ENCODE measurements at regions of chr9 and their contacts with region 1.

Region 1: DNA sequence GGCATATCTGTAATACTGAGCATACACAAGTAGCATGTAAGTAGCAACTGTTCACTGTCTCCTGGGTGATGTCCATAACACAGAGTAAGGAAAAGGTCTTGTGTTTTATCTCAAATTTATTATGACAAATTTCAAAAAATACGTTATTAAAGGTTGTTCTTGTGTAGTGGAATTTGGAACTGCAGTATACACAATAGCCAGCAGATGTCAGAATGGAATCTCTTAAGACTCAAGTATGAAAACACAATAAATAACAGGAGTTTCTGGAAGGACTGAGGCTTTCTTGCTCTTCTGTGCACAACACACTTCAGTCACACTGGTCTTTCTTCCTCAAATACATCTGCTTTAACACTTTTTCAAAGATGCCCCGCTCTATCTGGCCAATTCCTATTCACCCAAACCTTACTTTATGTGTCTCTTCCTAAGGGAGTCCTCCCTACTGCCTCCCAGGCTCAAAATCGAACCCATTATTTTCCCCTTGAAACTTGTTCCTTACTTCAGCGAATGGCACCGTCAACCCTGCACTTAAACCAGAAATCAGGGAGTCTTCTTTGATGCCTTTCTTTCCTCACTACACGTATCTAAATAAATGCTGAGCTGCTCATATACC is 6.5 kb upstream of the FBXO10 start:
- DNase-seq: peak in 1 of 2 experiments; percentile 20
- H3K4me3 ChIP-seq: no peak overlapping the region
- H3K4me3 Mint-ChIP-seq: no peak overlapping the region
- H3K27ac Mint-ChIP-seq: no peak overlapping the region
- H3K4me1 ChIP-seq: no peaks in the 10 kb centered on the region
- H3K4me1 Mint-ChIP-seq: peaks cover 10% of the 10 kb centered on the region
- H3K27me3 ChIP-seq: no peaks in the 10 kb centered on the region
- H3K27me3 Mint-ChIP-seq: no peaks in the 10 kb centered on the region
- CTCF ChIP-seq: peak; percentile 41 to 66

Region 2: DNA sequence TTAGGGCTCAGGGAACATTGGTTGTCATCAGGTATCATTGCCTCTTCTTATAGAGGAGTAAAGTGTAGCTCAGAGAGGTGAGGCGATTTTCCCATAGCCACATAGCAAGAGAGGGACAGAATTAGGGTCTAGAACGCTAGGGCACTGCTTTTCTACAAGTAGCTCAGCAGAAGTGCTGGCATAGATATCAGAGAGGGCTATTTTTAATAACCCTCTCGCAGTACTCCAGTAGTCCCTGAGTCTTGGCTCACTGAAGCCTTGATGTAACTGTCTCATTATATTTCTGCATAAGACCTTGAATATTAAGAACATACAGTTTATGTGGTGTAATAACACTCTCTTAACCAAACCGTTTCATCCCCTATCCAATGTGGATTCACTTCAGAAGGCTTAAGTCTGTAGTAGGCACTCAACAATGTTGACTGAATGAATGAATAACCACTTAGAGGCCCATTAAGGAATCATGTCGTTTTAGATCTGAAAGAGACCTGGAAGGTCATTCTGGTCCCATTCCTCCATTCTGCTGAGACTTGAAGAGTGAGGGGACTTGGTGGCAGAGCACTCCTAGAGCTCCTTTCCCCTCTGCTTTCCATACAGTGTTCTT is 63.4 kb after region 1 on chr9:
- CTCF ChIA-PET with region 1: no interaction called
- POLR2A ChIA-PET with region 1: no interaction called
- intact Hi-C with region 1: loop called (anchors 5 kb)
- DNase-seq: no peak
- H3K4me3 ChIP-seq: no peak overlapping the region
- H3K4me3 Mint-ChIP-seq: no peak overlapping the region
- H3K27ac Mint-ChIP-seq: no peak overlapping the region
- H3K4me1 ChIP-seq: no peaks in the 10 kb centered on the region; the same call in 1 of the 2 replicates
- H3K4me1 Mint-ChIP-seq: no peaks in the 10 kb centered on the region
- H3K27me3 ChIP-seq: no peaks in the 10 kb centered on the region; the same call in 1 of the 2 replicates
- H3K27me3 Mint-ChIP-seq: peaks cover 35% of the 10 kb centered on the region
- CTCF ChIP-seq: no peak

Region 3: DNA sequence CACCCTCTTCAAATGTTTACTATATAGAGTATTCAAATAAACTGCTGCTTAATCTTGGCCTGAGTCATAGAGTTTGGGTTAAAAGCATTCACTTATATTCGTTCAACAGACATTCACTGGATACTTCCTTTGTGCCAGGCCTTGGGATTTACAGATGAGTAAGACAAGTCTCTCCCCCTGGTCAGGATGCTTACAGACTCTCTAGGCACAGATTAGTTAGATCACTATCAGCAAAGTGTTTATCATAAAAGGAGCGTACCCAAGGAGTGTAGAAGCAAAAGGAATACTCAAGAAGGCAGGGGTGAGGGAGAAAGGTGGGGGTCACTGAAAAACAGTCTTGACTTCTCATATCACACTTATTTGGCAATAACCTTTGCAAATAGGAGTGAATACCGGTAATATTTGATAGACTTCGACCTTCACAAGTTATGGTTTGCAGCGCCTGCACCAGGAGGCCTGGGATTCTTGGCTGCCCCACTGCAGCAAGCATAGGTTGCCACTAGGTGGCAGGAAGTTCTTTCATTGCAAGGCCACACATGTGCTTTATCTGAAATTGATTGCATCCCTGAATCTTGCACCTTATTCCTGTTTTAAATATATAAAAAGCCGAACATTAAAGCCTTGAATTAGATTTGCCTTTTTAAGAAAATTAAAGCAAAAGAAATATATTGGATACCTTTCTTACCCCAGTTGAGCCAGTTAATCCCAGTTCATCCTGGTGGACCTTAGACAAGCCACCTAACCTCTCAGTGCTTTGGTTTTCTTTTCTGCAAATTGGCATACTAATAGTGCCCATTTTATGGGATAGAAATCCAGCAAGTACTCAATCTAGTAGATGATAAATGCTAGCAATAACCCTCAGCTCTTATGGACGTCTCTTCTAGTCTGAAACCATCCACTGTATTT is 164.4 kb after region 1 on chr9:
- CTCF ChIA-PET with region 1: no interaction called
- POLR2A ChIA-PET with region 1: no interaction called
- intact Hi-C with region 1: loop called (anchors 2 kb)
- DNase-seq: peak; percentile 61 to 73
- H3K4me3 ChIP-seq: no peak overlapping the region
- H3K4me3 Mint-ChIP-seq: no peak overlapping the region
- H3K27ac Mint-ChIP-seq: no peak overlapping the region
- H3K4me1 ChIP-seq: no peaks in the 10 kb centered on the region
- H3K4me1 Mint-ChIP-seq: no peaks in the 10 kb centered on the region
- H3K27me3 ChIP-seq: no peaks in the 10 kb centered on the region
- H3K27me3 Mint-ChIP-seq: no peaks in the 10 kb centered on the region
- CTCF ChIP-seq: peak; percentile 85 to 90

Region 4: DNA sequence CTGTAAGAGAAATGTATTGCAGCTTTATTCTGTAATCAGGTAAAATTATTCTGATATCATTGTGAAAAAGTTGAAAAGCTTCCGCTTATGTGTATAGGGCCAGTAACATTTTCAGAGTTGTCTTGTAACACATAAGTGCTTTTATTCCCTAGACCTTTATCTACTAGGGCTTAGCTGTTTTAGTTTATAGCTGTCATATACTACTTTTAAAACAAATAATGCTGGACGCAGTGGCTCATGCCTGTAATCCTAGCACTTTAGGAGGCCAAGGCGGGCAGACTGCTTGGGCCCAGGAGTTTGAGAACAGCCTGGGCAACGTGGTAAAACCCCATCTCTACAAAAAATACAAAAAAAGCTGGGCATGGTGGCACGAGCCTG is 288.1 kb after region 1 on chr9:
- CTCF ChIA-PET with region 1: no interaction called
- POLR2A ChIA-PET with region 1: no interaction called
- intact Hi-C with region 1: no loop called
- DNase-seq: no peak
- H3K4me3 ChIP-seq: no peak overlapping the region
- H3K4me3 Mint-ChIP-seq: no peak overlapping the region
- H3K27ac Mint-ChIP-seq: no peak overlapping the region
- H3K4me1 ChIP-seq: no peaks in the 10 kb centered on the region
- H3K4me1 Mint-ChIP-seq: no peaks in the 10 kb centered on the region
- H3K27me3 ChIP-seq: no peaks in the 10 kb centered on the region
- H3K27me3 Mint-ChIP-seq: no peaks in the 10 kb centered on the region
- CTCF ChIP-seq: no peak

Measured in Caco-2 (cell line).